KBM-7 (cell line): ENCODE measurements at regions of chr17 and their contacts with region 1.

Region 1: GRCh38 chr17:9529033-9529700 is 46.5 kb downstream of the STX8 start:
- DNase-seq: peak; percentile 28

Region 2: GRCh38 chr17:8991514-8992285 is 537.5 kb before region 1 on chr17:
- in situ Hi-C with region 1: loop called (anchors 25 kb)
- DNase-seq: peak; percentile 69

Region 3: GRCh38 chr17:9414471-9414870 is 114.7 kb before region 1 on chr17:
- in situ Hi-C with region 1: no loop called
- DNase-seq: no peak